Endothelial cell of umbilical vein (primary cell): ENCODE measurements at regions of chr7 and their contacts with region 1.

Region 1: DNA sequence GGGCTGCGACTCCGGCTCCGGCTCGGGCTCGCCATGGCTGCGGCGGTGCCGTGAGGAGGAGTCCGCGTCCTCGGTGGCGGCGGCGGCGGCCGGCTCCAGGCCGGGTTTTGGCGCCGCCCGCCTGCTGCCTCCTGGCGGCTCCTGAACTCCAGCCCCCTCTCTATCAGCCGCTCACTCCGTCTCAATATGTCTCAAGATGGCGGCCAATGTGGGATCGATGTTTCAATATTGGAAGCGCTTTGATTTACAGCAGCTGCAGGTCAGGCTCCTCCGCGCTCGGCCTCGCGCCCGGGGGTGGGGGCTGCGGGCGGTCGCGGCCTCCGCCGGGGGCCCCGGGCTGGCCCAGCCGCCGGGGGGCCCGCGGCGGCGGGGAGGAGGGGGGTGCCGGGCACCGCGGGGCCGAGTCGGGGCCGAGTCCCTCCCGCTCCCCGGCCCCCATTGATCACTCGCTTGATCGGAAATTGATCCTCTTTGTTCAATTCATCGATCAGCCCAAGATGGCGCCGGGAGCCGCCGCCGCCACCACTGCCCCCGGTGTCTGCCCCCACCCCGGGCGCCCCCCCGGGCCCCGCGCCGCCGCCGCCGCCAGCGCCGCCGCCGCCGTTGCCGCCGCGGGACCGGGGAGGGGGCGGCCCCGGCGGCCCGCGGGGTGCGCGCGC is 1.5 kb upstream of the CUX1 start:
- DNase-seq: peak; percentile 67
- H3K4me3 ChIP-seq: peak overlapping the region; percentile 47 to 67 (median 48)
- H3K27ac ChIP-seq: peak overlapping the region; percentile 38
- H3K4me1 ChIP-seq: peaks cover 14% of the 10 kb centered on the region
- H3K27me3 ChIP-seq: no peaks in the 10 kb centered on the region
- CTCF ChIP-seq: peak; percentile 2 to 19
- POLR2A ChIP-seq: peak; percentile 59

Region 2: GRCh38 chr7:101602484-101603241 is 213.3 kb before region 1 on chr7:
- CTCF ChIA-PET with region 1: interaction called, 36 read pairs
- POLR2A ChIA-PET with region 1: no interaction called
- dilution Hi-C with region 1: no loop called
- intact Hi-C with region 1: loop called (anchors 1 kb)
- DNase-seq: peak; percentile 64
- H3K4me3 ChIP-seq: no peak overlapping the region
- H3K27ac ChIP-seq: no peak overlapping the region
- H3K4me1 ChIP-seq: no peaks in the 10 kb centered on the region
- H3K27me3 ChIP-seq: no peaks in the 10 kb centered on the region
- CTCF ChIP-seq: peak; percentile 87 to 99
- POLR2A ChIP-seq: no peak

Region 3: DNA sequence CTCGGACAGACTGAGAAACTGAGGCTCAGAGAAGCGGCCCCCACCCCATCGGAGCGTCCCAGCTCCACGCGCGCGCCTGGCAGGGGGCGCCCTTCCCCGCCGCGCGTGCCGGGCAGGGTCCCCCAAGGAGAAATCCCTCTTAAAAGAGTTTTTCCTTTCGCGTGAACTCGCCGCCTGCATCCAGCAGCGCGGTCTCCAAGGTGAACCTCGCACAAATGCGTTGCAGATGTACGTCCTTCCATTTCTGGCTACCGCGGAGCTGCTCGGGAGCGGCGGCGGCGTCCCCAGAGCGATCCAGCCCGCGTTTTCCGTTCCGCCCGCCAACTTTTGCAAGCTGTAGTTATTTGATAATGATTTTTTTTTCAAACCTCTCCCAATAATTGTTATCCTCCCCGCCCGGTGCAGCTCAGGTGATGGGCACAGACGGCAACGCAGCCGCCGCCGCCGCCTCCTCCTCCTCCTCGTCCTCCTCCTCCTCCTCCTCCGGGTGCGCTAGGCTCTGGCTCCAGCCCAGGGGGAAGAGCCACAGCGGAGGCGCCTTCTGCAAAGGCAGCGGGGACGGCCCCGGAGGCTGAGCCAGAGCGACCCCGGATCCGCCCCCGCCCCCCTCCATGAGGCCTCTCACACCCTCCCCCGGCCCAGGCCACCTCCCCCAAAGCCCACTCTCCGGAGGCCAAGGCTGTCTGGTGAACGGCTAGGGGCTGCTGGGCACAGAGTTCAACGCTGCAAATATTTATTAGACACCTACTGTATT is 72.5 kb before region 1 on chr7:
- CTCF ChIA-PET with region 1: interaction called, 25 read pairs
- POLR2A ChIA-PET with region 1: no interaction called
- dilution Hi-C with region 1: no loop called
- intact Hi-C with region 1: loop called (anchors 1 kb)
- DNase-seq: peak; percentile 59
- H3K4me3 ChIP-seq: peak overlapping the region in 2 of 3 experiments; percentile 15 to 35
- H3K27ac ChIP-seq: no peak overlapping the region
- H3K4me1 ChIP-seq: no peaks in the 10 kb centered on the region
- H3K27me3 ChIP-seq: peaks cover 2 to 5% of the 10 kb centered on the region in 2 experiments
- CTCF ChIP-seq: peak; percentile 43 to 49
- POLR2A ChIP-seq: no peak

Region 4: DNA sequence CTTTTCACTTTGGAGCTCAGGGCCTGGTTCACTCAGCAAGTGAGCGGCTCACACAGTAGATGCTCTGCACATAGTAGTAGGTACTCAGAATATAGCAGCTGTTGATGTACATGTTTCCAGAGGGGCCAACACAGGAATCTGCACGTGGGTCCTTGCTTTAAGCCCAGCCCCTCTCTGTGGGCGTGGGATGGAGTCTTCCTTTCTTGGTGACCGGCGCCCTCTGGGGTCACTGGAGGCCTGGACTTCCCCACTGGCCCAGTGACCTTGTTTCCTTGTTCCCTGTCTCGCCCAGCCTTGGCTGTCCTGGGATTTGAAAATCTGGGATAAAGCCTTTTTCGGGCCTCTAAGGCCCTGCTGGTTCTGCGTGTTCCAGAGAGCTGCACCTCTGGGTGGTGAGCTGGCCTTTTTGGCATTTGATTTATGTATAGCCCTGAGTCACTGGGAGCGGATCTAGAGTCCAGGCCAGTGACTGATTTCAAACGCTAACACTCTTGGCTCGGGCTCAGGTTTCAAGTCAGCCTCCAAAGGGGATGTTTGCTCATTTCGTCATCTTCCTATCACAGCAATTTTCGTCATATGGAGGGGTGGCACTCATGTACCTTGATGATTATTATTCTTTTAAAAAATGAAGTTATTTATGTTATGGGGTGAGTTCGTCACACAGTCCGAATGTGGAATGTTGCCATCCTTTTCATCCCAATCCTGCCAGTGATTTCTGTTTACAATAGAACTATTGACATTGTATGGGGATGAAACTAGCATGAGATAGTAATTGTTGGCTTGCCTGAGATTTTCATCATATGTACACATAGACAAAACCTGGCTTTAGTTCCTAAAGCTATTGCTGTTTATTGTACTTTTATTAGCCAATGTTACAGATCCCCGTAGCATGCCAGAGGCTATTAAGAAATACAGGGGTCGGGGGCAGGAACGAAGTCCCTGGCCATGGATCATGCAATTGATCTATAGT is 66.9 kb after region 1 on chr7:
- CTCF ChIA-PET with region 1: interaction called, 4 read pairs
- POLR2A ChIA-PET with region 1: interaction called, 6 read pairs
- dilution Hi-C with region 1: no loop called
- intact Hi-C with region 1: loop called (anchors 2 kb)
- DNase-seq: peak; percentile 98
- H3K4me3 ChIP-seq: peak overlapping the region in 1 of 3 experiments; percentile 1
- H3K27ac ChIP-seq: peak overlapping the region; percentile 93
- H3K4me1 ChIP-seq: peaks cover 35% of the 10 kb centered on the region
- H3K27me3 ChIP-seq: no peaks in the 10 kb centered on the region
- CTCF ChIP-seq: no peak
- POLR2A ChIP-seq: no peak

Region 5: GRCh38 chr7:102125127-102125561 is 309.2 kb after region 1 on chr7:
- CTCF ChIA-PET with region 1: no interaction called
- POLR2A ChIA-PET with region 1: no interaction called
- dilution Hi-C with region 1: no loop called
- intact Hi-C with region 1: loop called (anchors 10 kb)
- DNase-seq: peak; percentile 15
- H3K4me3 ChIP-seq: no peak overlapping the region
- H3K27ac ChIP-seq: no peak overlapping the region
- H3K4me1 ChIP-seq: peaks cover 11% of the 10 kb centered on the region
- H3K27me3 ChIP-seq: no peaks in the 10 kb centered on the region
- CTCF ChIP-seq: no peak
- POLR2A ChIP-seq: no peak

Region 6: DNA sequence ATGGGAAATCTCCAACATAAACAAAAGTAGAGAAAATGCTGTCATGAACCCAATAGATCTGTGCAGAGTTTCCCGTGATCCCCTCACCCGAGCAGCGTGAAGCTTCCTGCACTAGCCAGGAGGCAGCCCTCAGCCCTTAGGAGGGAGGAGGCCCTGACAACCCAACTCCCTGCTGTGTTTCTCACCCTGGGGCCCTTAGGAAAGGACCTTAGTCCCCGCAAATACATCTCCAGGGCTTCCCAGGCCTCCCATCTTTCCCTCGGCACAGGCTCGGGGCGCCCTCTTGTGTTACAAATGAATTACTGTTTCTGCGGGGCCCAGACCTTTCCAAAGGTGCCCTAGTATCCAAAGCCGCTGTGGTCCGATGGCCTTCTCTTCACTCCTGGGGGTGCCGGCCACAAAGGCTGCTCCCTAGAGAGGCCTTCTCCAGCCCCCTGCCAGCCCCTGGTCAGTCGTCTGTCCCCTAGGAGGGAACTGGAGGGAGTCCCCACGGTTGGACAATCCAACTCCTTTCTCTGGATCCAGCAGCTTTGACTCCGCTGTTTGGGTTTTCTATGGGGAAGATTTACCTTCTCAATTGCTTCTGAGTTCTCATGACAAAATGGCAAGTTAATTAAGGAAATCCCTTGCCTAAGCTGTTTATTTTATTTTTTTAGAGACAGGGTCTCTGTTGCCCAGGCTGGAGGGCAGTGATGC is 420.8 kb after region 1 on chr7:
- CTCF ChIA-PET with region 1: interaction called, 9 read pairs
- POLR2A ChIA-PET with region 1: no interaction called
- dilution Hi-C with region 1: no loop called
- intact Hi-C with region 1: loop called (anchors 1 kb)
- DNase-seq: peak; percentile 57
- H3K4me3 ChIP-seq: no peak overlapping the region
- H3K27ac ChIP-seq: no peak overlapping the region
- H3K4me1 ChIP-seq: no peaks in the 10 kb centered on the region
- H3K27me3 ChIP-seq: no peaks in the 10 kb centered on the region
- CTCF ChIP-seq: peak; percentile 69 to 79
- POLR2A ChIP-seq: no peak